ENCODE measurements at regions of chr19 and their contacts with region 1.

Region 1: GRCh38 chr19:28737021-28737895 is 475.7 kb downstream of the UQCRFS1 start:
- DNase-seq: peak; percentile 44
- ATAC-seq: peak; percentile 79
- H3K4me3 ChIP-seq: no peak overlapping the region
- H3K27ac ChIP-seq: no peak overlapping the region
- H3K4me1 ChIP-seq: no peaks in the 10 kb centered on the region
- H3K27me3 ChIP-seq: no peaks in the 10 kb centered on the region
- CTCF ChIP-seq: peak; percentile 71
- POLR2A ChIP-seq: no peak
- RAD21 ChIP-seq: peak; percentile 59

Region 2: DNA sequence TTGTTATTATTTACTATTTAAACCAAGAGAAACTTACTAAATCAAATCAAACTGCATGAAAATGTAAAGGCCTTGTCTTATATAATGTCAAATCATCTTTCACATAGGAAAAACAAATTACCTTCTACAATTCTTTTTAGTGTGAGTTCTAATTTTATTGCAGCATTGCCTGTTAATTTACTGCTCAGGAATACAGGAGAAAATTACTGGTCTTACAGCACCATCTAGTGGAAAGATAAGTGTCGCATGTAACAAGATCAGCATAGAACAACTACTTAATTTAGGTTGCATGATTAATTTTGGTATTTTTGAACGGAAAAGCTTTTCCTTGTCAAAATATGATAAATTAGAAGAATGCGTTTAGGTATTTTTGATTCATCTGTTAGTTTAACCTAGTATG is 27.0 kb before region 1 on chr19:
- CTCF ChIA-PET with region 1: no interaction called
- POLR2A ChIA-PET with region 1: no interaction called
- dilution Hi-C with region 1: no loop called
- in situ Hi-C with region 1: no loop called
- intact Hi-C with region 1: no loop called
- DNase-seq: peak; percentile 67
- ATAC-seq: peak; percentile 59; the same call in 1 of the 2 replicates
- H3K4me3 ChIP-seq: no peak overlapping the region
- H3K27ac ChIP-seq: no peak overlapping the region
- H3K4me1 ChIP-seq: no peaks in the 10 kb centered on the region
- H3K27me3 ChIP-seq: no peaks in the 10 kb centered on the region
- CTCF ChIP-seq: peak; percentile 70
- POLR2A ChIP-seq: no peak
- RAD21 ChIP-seq: peak; percentile 74

Region 3: DNA sequence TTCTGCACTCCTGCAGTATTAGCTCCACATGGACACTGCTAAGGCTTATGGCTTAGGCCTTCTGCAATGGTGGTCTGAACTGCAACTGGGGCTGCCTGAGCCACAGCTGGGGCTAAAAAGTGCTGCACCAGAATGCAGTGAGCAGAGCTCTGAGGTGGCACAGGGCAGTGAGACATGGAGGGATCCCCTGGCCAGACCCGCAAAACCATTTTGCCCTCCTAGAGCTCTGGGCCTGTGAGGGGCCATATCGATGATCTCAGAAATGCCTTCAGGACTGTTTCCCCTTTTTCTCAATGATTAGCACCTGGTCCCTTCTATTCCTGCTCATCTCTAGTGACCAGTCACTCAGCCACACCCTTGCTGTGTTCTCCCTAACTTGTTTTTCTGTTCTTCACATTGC is 78.0 kb after region 1 on chr19:
- CTCF ChIA-PET with region 1: no interaction called
- POLR2A ChIA-PET with region 1: no interaction called
- dilution Hi-C with region 1: no loop called
- in situ Hi-C with region 1: no loop called
- intact Hi-C with region 1: no loop called
- DNase-seq: no peak
- ATAC-seq: no peak
- H3K4me3 ChIP-seq: no peak overlapping the region
- H3K27ac ChIP-seq: no peak overlapping the region
- H3K4me1 ChIP-seq: no peaks in the 10 kb centered on the region
- H3K27me3 ChIP-seq: no peaks in the 10 kb centered on the region
- CTCF ChIP-seq: no peak
- POLR2A ChIP-seq: no peak
- RAD21 ChIP-seq: no peak

Region 4: GRCh38 chr19:28836421-28836820 is 99.2 kb after region 1 on chr19:
- CTCF ChIA-PET with region 1: no interaction called
- POLR2A ChIA-PET with region 1: no interaction called
- dilution Hi-C with region 1: no loop called
- in situ Hi-C with region 1: no loop called
- intact Hi-C with region 1: no loop called
- DNase-seq: no peak
- ATAC-seq: no peak
- H3K4me3 ChIP-seq: no peak overlapping the region
- H3K27ac ChIP-seq: no peak overlapping the region
- H3K4me1 ChIP-seq: no peaks in the 10 kb centered on the region
- H3K27me3 ChIP-seq: no peaks in the 10 kb centered on the region
- CTCF ChIP-seq: no peak
- POLR2A ChIP-seq: no peak
- RAD21 ChIP-seq: no peak

Region 5: GRCh38 chr19:28980236-28980868 is 243.1 kb after region 1 on chr19:
- CTCF ChIA-PET with region 1: no interaction called
- POLR2A ChIA-PET with region 1: no interaction called
- dilution Hi-C with region 1: no loop called
- in situ Hi-C with region 1: loop called (anchors 25 kb)
- intact Hi-C with region 1: loop called (anchors 1 kb)
- DNase-seq: peak; percentile 68
- ATAC-seq: peak; percentile 95
- H3K4me3 ChIP-seq: no peak overlapping the region
- H3K27ac ChIP-seq: no peak overlapping the region
- H3K4me1 ChIP-seq: no peaks in the 10 kb centered on the region
- H3K27me3 ChIP-seq: peaks cover 2% of the 10 kb centered on the region
- CTCF ChIP-seq: peak; percentile 68
- POLR2A ChIP-seq: no peak
- RAD21 ChIP-seq: peak; percentile 76

Region 6: GRCh38 chr19:29121684-29122083 is 384.4 kb after region 1 on chr19:
- CTCF ChIA-PET with region 1: no interaction called
- POLR2A ChIA-PET with region 1: no interaction called
- dilution Hi-C with region 1: no loop called
- in situ Hi-C with region 1: no loop called
- intact Hi-C with region 1: loop called (anchors 2 kb)
- DNase-seq: no peak
- ATAC-seq: peak; percentile 24; the same call in 1 of the 2 replicates
- H3K4me3 ChIP-seq: no peak overlapping the region
- H3K27ac ChIP-seq: no peak overlapping the region
- H3K4me1 ChIP-seq: no peaks in the 10 kb centered on the region
- H3K27me3 ChIP-seq: no peaks in the 10 kb centered on the region
- CTCF ChIP-seq: peak; percentile 44
- POLR2A ChIP-seq: no peak
- RAD21 ChIP-seq: peak; percentile 49

Region 7: GRCh38 chr19:29263305-29264135 is 526.3 kb after region 1 on chr19:
- CTCF ChIA-PET with region 1: interaction called, 5 read pairs
- POLR2A ChIA-PET with region 1: no interaction called
- dilution Hi-C with region 1: no loop called
- in situ Hi-C with region 1: loop called (anchors 25 kb)
- intact Hi-C with region 1: loop called (anchors 2 kb)
- DNase-seq: peak; percentile 17
- ATAC-seq: peak; percentile 69
- H3K4me3 ChIP-seq: no peak overlapping the region
- H3K27ac ChIP-seq: no peak overlapping the region
- H3K4me1 ChIP-seq: no peaks in the 10 kb centered on the region
- H3K27me3 ChIP-seq: no peaks in the 10 kb centered on the region
- CTCF ChIP-seq: peak; percentile 62
- POLR2A ChIP-seq: no peak
- RAD21 ChIP-seq: peak; percentile 60